Activated T-helper 2 cell treated with anti-CD3 and anti-CD28 coated beads, Interferon-gamma antibody, Interleukin-2, Interleukin-4, amounts not matched to agents 10 μg/mL and 5 μg/mL and 100 μg/mL, durations not matched to agents 14 hours and 24 hours and 36 hours (primary cell): ENCODE measurements at regions of chr7 and their contacts with region 1.

Region 1: GRCh38 chr7:22103255-22103969 is 157.7 kb upstream of the CDCA7L start:
- DNase-seq: peak; percentile 46
- H3K4me3 Mint-ChIP-seq: no peak overlapping the region
- H3K27ac Mint-ChIP-seq: no peak overlapping the region
- H3K4me1 Mint-ChIP-seq: peaks cover 7% of the 10 kb centered on the region
- H3K27me3 Mint-ChIP-seq: peaks cover 19% of the 10 kb centered on the region

Region 2: GRCh38 chr7:22332461-22332870 is 229.1 kb after region 1 on chr7:
- intact Hi-C with region 1: no loop called
- DNase-seq: no peak
- H3K4me3 Mint-ChIP-seq: no peak overlapping the region
- H3K27ac Mint-ChIP-seq: no peak overlapping the region
- H3K4me1 Mint-ChIP-seq: no peaks in the 10 kb centered on the region
- H3K27me3 Mint-ChIP-seq: peaks cover 15% of the 10 kb centered on the region

Region 3: GRCh38 chr7:22488643-22489462 is 385.4 kb after region 1 on chr7:
- intact Hi-C with region 1: loop called (anchors 2 kb)
- DNase-seq: peak; percentile 34
- H3K4me3 Mint-ChIP-seq: no peak overlapping the region
- H3K27ac Mint-ChIP-seq: no peak overlapping the region
- H3K4me1 Mint-ChIP-seq: peaks cover 30% of the 10 kb centered on the region
- H3K27me3 Mint-ChIP-seq: peaks cover 19% of the 10 kb centered on the region

Region 4: DNA sequence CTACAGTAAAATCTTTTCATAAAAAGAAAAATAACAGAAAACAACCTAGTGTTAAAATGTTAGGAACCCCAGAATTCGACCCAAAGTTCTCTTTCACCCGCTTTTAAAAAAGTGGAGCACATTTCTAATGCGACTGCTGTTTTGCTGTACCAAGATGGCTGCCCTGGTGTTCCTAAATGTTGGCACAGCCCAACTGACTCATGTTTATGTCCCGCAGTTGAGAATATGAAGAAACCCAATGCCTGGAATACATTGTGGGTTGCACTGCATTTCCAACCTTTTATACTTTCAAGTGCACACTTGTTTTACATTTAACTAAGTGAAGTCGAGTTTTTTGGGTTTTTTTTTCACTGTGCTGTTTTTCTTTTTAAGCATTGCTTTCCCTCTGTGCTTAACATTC is 395.6 kb after region 1 on chr7:
- intact Hi-C with region 1: loop called (anchors 1 kb)
- DNase-seq: no peak
- H3K4me3 Mint-ChIP-seq: no peak overlapping the region
- H3K27ac Mint-ChIP-seq: no peak overlapping the region
- H3K4me1 Mint-ChIP-seq: peaks cover 3% of the 10 kb centered on the region
- H3K27me3 Mint-ChIP-seq: peaks cover 44% of the 10 kb centered on the region